ENCODE measurements at regions of chr17 and their contacts with region 1.

Region 1: DNA sequence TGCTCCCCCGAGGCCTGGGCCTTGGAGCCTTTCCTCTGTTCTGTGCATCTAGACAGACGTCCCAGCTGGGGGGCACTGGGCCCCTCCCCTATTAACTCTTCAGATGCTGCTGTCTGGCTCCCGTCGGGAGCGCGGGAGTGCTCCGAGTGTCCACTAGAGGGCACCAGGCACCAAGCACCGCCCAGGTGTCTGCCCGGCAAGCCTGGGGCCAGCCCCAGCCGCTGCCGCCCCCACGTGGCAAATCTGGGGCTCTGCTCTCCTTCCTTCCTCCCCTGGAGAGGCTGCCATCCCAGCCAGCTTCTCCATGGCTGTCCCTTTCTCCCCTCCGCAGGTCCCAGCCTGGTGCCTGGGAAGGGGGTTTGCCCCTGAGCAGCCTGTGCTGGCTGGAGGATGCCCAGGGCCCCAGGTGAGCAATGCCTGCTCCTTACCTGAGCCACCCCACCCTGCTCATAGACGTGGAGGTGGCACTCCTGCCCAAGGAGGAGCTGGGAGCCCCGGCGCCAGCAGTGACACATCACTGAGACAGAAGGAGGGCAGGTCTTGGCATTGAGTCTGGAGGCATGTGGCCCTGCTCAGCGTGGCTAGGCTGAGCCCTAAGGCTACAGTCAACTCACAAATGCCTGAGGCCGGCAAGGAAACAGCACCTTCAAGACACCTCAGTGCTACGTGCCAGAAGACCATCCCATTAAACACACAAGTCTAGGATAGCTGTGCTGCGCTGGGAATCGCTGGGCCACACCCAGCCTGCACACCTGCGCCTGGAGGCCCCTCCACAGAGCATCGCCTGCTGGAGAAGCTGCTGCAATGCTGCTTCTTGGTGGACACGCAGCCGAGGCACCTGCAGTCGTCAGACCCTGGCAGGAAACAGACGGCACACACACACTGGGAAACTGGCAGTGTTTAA is 19.7 kb downstream of the TMEM235 start:
- DNase-seq: no peak
- H3K4me3 ChIP-seq: no peak overlapping the region
- CTCF ChIP-seq: peak; percentile 100

Region 2: GRCh38 chr17:78219396-78220150 is 31.6 kb before region 1 on chr17:
- CTCF ChIA-PET with region 1: interaction called, 55 read pairs
- POLR2A ChIA-PET with region 1: no interaction called
- DNase-seq: no peak
- H3K4me3 ChIP-seq: no peak overlapping the region
- CTCF ChIP-seq: no peak

Region 3: DNA sequence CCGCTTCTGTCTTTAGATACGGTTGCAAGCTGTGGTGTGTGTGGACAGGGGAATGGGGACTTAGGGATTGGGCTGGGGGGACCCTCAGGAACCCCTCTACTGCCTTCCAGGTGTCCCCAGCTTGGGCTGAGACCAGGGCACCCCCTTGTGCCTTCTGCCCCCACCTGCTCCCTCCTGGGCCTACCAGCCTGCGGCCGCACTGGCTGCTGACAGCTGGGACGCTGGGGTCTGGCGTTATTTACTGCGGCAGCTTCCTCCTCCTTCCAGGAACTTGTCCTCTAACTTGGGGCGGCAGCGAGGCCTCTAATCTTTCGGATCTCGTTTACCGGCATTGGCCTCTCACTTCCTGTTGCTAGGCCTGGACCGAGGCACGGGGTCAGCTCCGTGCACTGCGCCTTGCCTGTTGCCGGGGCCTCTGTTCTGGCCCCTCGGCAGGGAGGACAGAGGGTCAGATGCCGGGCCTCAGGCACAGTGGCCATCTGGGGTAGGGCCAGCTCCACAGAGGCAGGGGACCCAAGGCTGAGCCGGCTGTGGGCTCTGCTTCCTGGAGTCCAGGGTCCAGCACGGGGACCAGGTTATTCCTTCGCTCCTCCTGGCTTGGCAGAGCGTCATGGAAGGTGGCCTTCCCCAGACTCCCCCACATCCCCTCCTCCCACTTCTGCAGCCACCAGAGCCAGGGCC is 12.1 kb after region 1 on chr17:
- CTCF ChIA-PET with region 1: interaction called, 25 read pairs
- POLR2A ChIA-PET with region 1: no interaction called
- DNase-seq: no peak
- H3K4me3 ChIP-seq: no peak overlapping the region
- CTCF ChIP-seq: no peak

Region 4: DNA sequence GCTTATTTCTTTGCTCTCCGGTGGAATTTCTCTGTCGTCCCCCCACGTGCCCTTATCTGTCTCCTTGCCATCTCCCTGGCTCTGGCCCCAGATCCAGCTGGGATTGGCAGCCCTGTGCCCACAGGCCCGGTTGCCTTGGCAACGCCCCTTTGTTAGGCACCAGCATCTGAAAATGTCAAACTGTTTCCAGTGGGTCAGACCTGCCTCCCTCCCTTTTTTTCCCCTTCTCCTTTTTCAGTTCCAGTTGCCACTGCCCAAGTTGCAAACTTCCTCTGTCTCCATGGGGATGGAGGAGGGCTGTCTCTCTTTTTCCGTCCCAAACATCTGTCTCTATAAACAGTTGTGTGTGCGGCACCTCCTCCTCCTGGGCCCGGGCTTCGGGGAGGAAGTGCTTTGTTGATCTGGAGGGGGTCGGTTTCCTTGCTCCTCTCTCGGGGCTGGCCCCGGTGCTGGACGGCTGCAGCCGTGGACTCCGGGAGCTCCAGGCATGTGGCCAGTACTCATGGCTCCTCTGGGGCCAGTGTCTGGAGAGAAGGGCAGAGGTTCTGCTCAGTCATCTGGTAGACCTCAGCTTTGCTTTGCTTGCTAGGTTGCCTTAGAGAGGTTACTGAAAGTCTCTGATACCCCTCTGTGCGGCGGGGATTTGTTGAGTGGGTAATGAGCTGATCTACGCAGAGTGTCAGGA is 73.4 kb after region 1 on chr17:
- CTCF ChIA-PET with region 1: interaction called, 10 read pairs
- POLR2A ChIA-PET with region 1: no interaction called
- DNase-seq: no peak
- H3K4me3 ChIP-seq: peak overlapping the region; percentile 7; the same call in 1 of the 2 replicates
- CTCF ChIP-seq: no peak

Region 5: GRCh38 chr17:78390241-78391050 is 139.3 kb after region 1 on chr17:
- CTCF ChIA-PET with region 1: interaction called, 18 read pairs
- POLR2A ChIA-PET with region 1: no interaction called
- DNase-seq: peak; percentile 96
- H3K4me3 ChIP-seq: no peak overlapping the region
- CTCF ChIP-seq: peak; percentile 11

Measured in AG04449 (cell line).